K562 (cell line): ENCODE measurements at regions of chr19 and their contacts with region 1.

Region 1: DNA sequence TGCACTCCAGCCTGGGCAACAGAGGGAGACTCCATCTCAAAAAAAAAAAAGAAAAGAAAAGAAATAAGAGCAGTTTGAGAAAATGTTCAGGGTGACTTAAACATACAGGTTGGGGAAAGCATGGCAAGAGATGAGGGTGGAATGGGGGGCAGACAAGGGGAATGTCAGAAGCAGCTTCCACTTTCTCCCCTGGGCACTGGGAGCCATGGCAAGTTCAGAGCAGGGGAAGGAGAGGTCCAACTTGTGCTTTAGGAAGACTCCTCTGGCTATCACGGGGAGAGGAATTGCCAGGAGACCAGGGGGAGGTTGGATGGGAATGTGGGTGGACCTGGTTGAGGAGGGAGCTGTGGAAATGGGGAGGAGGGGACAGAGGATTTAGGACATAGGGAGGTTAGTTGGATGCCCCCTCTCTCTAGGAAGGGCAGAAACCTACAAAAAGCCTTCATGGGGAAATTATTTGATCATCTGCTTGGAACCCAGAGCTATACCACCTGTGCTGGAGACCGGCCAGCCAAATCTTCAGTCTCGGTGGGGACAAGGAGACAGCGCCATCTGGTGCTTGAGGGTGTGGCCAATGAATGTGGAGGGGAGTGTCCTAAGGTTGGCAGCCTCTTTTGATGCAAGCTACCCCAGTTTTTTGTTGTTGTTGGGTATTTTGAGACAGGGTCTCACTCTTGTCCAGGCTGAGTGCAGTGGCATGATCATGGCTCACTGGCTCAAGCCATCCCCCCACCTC is 7.3 kb upstream of the STRN4 start:
- DNase-seq: peak; percentile 50 to 81 (median 66)
- ATAC-seq: peak; percentile 82
- H3K4me3 ChIP-seq: no peak overlapping the region
- H3K27ac ChIP-seq: no peak overlapping the region
- H3K4me1 ChIP-seq: peaks cover 8 to 20% of the 10 kb centered on the region in 2 experiments; a peak in 4 of 5 replicates
- H3K27me3 ChIP-seq: no peaks in the 10 kb centered on the region
- CTCF ChIP-seq: peak; percentile 77 to 83 (median 79)
- EP300 ChIP-seq: no peak
- POLR2A ChIP-seq: no peak
- RAD21 ChIP-seq: peak; percentile 37 to 74

Region 2: GRCh38 chr19:46614114-46614722 is 139.4 kb before region 1 on chr19:
- CTCF ChIA-PET with region 1: interaction called, 6 read pairs
- POLR2A ChIA-PET with region 1: no interaction called
- in situ Hi-C with region 1: no loop called
- intact Hi-C with region 1: loop called (anchors 5 kb)
- DNase-seq: peak; percentile 86 to 88 (median 86)
- ATAC-seq: peak; percentile 90
- H3K4me3 ChIP-seq: no peak overlapping the region
- H3K27ac ChIP-seq: no peak overlapping the region
- H3K4me1 ChIP-seq: peaks cover 17 to 18% of the 10 kb centered on the region in 2 experiments
- H3K27me3 ChIP-seq: no peaks in the 10 kb centered on the region
- CTCF ChIP-seq: peak; percentile 92 to 94 (median 94)
- EP300 ChIP-seq: no peak
- POLR2A ChIP-seq: no peak
- RAD21 ChIP-seq: peak; percentile 83 to 92

Region 3: GRCh38 chr19:46718157-46718933 is 35.2 kb before region 1 on chr19:
- CTCF ChIA-PET with region 1: no interaction called
- POLR2A ChIA-PET with region 1: no interaction called
- in situ Hi-C with region 1: no loop called
- intact Hi-C with region 1: no loop called
- DNase-seq: peak in 1 of 4 experiments; percentile 55
- ATAC-seq: no peak
- H3K4me3 ChIP-seq: no peak overlapping the region
- H3K27ac ChIP-seq: peak overlapping the region; percentile 31; the same call in 2 of the 3 replicates
- H3K4me1 ChIP-seq: peaks cover 22 to 74% of the 10 kb centered on the region in 2 experiments
- H3K27me3 ChIP-seq: no peaks in the 10 kb centered on the region
- CTCF ChIP-seq: no peak
- EP300 ChIP-seq: no peak
- POLR2A ChIP-seq: no peak
- RAD21 ChIP-seq: no peak

Region 4: GRCh38 chr19:46766569-46767317 is 13.2 kb after region 1 on chr19:
- CTCF ChIA-PET with region 1: no interaction called
- POLR2A ChIA-PET with region 1: interaction called, 11 read pairs
- in situ Hi-C with region 1: no loop called
- intact Hi-C with region 1: no loop called
- DNase-seq: peak; percentile 73 to 81 (median 75)
- ATAC-seq: peak; percentile 95
- H3K4me3 ChIP-seq: no peak overlapping the region
- H3K27ac ChIP-seq: no peak overlapping the region; the same call in 2 of the 3 replicates
- H3K4me1 ChIP-seq: peaks cover 0 to 7% of the 10 kb centered on the region in 2 experiments; a peak in 3 of 5 replicates
- H3K27me3 ChIP-seq: no peaks in the 10 kb centered on the region
- CTCF ChIP-seq: peak; percentile 73 to 93 (median 75)
- EP300 ChIP-seq: no peak
- POLR2A ChIP-seq: no peak
- RAD21 ChIP-seq: peak in 1 of 2 experiments; percentile 45; a peak in 2 of 4 replicates

Region 5: GRCh38 chr19:46840136-46840942 is 86.8 kb after region 1 on chr19:
- CTCF ChIA-PET with region 1: interaction called, 42 read pairs
- POLR2A ChIA-PET with region 1: interaction called, 3 read pairs
- in situ Hi-C with region 1: no loop called
- intact Hi-C with region 1: loop called (anchors 1 kb)
- DNase-seq: peak; percentile 60 to 78 (median 66)
- ATAC-seq: peak; percentile 71
- H3K4me3 ChIP-seq: no peak overlapping the region
- H3K27ac ChIP-seq: no peak overlapping the region
- H3K4me1 ChIP-seq: peaks cover 33 to 37% of the 10 kb centered on the region in 2 experiments
- H3K27me3 ChIP-seq: no peaks in the 10 kb centered on the region
- CTCF ChIP-seq: peak; percentile 86 to 92 (median 86)
- EP300 ChIP-seq: no peak
- POLR2A ChIP-seq: no peak
- RAD21 ChIP-seq: peak; percentile 74 to 75

Region 6: GRCh38 chr19:46990991-46991676 is 237.5 kb after region 1 on chr19:
- CTCF ChIA-PET with region 1: interaction called, 5 read pairs
- POLR2A ChIA-PET with region 1: no interaction called
- in situ Hi-C with region 1: loop called (anchors 10 kb)
- intact Hi-C with region 1: loop called (anchors 2 kb)
- DNase-seq: peak; percentile 73 to 86 (median 80)
- ATAC-seq: peak; percentile 92
- H3K4me3 ChIP-seq: no peak overlapping the region
- H3K27ac ChIP-seq: peak overlapping the region; percentile 24; the same call in 2 of the 3 replicates
- H3K4me1 ChIP-seq: peaks cover 8 to 28% of the 10 kb centered on the region in 2 experiments; a peak in 4 of 5 replicates
- H3K27me3 ChIP-seq: no peaks in the 10 kb centered on the region
- CTCF ChIP-seq: peak; percentile 88 to 92 (median 91)
- EP300 ChIP-seq: 0 out of 2 replicates have a peak, but pooled peaks have one; percentile 14
- POLR2A ChIP-seq: no peak
- RAD21 ChIP-seq: peak; percentile 86 to 95